Aorta (tissue), 5 donors: ENCODE measurements at regions of chr17 and their contacts with region 1.

Region 1: DNA sequence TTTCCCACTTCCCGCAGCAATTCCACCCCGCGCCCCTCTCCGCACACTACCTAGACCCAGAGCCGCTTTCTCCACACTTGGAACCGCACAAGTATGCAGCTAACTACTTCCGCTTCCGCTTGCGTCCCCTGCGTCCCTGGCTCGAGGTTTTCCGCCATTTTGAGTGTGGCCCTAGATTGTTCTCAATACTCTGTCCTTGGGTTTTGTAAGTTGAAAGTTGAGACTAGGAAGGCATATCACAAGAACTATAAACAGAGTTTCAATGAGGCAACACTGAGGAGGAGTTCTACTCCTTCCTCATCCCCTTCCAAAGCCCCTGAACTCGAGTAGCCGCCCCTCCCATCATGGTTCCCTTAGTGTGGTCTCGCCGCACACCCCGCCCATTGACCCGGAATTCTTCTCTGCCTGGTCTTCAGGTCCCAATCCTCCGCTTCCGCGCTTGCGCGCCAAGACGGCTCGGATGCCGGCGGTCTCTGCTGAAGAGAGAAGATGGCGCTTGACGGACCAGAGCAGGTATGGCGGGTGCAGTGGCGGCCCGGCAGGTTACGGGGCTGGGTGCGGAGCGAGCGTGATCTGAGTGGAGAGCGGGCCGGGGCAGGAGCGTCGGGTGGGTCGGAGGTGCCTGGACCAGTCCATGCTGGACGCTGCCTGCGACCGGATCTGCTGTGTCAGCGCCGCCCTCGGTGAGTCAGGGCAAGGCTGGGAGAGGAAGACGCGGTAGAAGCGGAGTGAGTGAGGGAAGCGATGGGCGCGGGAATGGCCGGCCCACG is at the starts of genes FTSJ3 and PSMC5:
- DNase-seq: peak; percentile 97 to 99
- ATAC-seq: peak; percentile 96
- H3K4me3 ChIP-seq: peak within 1 kb of the TSS; percentile 36 to 63
- H3K27ac ChIP-seq: peak within 1 kb of the TSS in 1 of 2 donors; percentile 30
- H3K4me1 ChIP-seq: no peaks in the 10 kb centered on the region
- H3K27me3 ChIP-seq: no peaks in the 10 kb centered on the region
- total RNA-seq, gene FTSJ3: 29.4 to 38.1 TPM
- total RNA-seq, gene PSMC5: 81.1 to 92.9 TPM

Region 2: GRCh38 chr17:64073771-64074703 is 246.8 kb after region 1 on chr17:
- intact Hi-C with region 1: no loop called
- DNase-seq: no peak
- ATAC-seq: peak; percentile 21
- H3K4me3 ChIP-seq: no peak overlapping the region
- H3K27ac ChIP-seq: no peak overlapping the region
- H3K4me1 ChIP-seq: no peaks in the 10 kb centered on the region
- H3K27me3 ChIP-seq: no peaks in the 10 kb centered on the region

Region 3: DNA sequence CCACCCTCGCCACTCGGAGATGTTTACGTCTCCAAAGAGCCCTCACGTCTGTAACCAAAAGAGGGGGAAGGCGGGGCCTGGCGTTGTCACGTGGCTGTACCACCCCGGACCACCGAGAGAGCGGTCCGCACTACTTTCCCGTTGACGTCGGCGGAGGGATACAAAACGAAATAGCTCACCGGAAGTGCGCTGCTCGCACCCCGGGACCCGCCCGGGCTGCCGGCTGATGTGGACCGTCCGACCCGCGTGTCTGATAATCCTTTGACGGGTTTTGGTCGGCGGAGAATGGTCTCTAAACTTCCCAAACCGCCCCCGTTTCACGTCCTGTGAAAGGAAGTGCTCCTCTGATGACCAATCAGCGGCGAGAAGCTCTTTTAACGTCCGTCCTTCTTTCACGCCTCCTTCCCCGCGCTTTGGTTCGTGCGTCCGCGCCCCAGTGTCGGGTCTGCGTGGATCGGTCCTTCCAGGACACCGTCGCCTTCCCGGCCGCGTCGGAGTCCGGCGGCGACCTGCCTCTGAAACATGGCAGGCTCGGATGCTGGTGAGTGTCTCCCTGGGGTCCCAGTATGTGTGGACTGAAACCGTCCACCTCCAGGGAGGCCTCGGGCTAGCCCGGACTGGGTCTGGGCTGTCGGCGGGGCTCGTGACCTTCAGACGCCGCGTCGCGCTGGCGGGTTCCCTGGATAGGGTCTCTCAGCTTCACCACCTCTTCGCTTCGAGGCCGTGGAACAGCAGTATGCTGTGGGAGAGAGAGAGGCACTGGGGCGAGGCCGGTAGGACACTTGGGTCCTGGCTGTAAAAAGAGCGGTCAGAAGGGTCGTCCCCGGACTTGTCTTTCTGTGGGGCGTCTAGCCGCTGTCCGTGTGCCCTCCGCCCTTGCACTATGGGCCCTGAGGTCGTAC is 679.6 kb after region 1 on chr17 and contains the start of gene CEP95:
- intact Hi-C with region 1: loop called in 1 of 2 experiments (anchors 5 kb)
- DNase-seq: peak; percentile 97
- ATAC-seq: peak; percentile 92
- H3K4me3 ChIP-seq: peak within 1 kb of the TSS; percentile 62 to 89
- H3K27ac ChIP-seq: peak within 1 kb of the TSS; percentile 73 to 95
- H3K4me1 ChIP-seq: no peaks in the 10 kb centered on the region
- H3K27me3 ChIP-seq: peaks cover 0 to 1% of the 10 kb centered on the region in 2 donors
- total RNA-seq, gene CEP95: 39.7 to 49.8 TPM